Esophagus muscularis mucosa (tissue), 4 donors: ENCODE measurements at regions of chr17 and their contacts with region 1.

Region 1: DNA sequence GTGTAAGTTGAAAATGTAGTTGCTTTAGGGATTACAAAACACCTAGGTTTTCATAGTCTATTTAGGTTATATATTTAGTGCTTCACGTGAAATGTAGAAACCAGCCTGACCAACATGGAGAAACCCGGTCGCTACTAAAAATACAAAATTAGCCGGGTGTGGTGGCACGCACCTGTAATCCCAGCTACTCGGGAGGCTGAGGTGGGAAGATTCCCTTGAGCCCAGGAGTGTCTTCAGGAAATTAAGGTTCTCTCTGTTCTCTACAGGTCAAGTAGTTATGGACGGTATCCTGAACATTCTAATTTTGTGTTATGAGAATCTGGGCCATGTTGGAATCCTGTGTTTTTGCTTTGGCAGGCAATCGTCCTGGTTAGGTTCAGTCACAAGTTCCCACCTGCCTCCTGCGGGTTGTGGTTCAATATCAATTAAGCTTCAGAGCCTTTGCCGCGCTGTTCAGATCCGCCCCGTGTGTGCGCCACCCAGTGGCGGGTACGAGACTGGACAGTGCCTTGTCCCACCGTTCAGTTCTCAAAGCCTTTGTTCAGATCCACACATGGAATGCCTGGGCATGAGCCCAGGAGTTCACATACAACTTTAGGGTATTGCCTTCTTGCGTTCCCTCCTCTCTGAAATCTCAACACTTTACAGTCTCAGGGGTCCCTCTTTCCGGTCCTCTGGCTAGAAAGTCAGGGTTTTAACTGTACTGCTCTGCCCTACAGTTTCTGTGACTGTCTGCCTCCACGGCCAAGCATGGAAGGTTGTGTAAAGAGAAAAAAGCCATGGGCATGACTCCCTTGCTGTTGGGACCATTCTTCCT is 41.7 kb downstream of the HEATR6 start:
- DNase-seq: no peak
- H3K4me3 ChIP-seq: no peak overlapping the region
- H3K27ac ChIP-seq: no peak overlapping the region
- H3K4me1 ChIP-seq: peaks cover 0 to 9% (median 8%) of the 10 kb centered on the region in 4 donors
- H3K27me3 ChIP-seq: peaks cover 0 to 5% (median 0%) of the 10 kb centered on the region in 4 donors
- CTCF ChIP-seq: peak; percentile 74 to 89 (median 74)
- EP300 ChIP-seq: no peak
- POLR2A ChIP-seq: no peak

Region 2: GRCh38 chr17:59038734-59039133 is 998.3 kb before region 1 on chr17:
- intact Hi-C with region 1: no loop called
- DNase-seq: no peak
- H3K4me3 ChIP-seq: no peak overlapping the region
- H3K27ac ChIP-seq: no peak overlapping the region
- H3K4me1 ChIP-seq: no peaks in the 10 kb centered on the region
- H3K27me3 ChIP-seq: no peaks in the 10 kb centered on the region
- CTCF ChIP-seq: no peak
- EP300 ChIP-seq: no peak
- POLR2A ChIP-seq: no peak

Region 3: DNA sequence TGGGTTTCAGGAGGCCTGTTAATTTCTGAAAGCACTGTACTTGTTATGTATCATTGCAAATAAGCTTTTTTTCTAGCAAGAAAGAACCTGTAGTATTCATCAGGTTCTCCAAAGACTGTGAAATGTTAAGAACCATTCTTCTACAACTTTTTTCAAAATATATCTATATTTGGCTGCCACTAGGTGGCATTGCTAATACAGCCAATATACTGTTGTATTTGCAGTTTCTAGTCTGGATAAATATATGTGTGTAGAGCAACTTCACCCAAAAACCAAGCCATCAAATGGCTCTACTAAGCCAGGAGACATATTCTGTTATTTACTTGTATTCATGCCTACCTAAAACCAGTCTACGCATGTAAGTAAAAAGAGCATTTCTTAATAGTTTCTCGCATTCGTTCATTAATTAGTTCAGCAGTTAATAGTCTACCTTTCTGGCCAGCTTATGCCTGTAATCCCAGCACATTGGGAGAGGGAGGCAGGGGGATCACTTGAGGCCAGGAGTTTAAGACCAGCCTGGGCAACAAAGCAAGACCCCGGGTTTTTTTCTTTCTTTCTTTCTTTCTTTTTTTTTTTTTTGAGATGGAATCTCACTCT is 290.1 kb before region 1 on chr17:
- intact Hi-C with region 1: loop called (anchors 5 kb)
- DNase-seq: no peak
- H3K4me3 ChIP-seq: no peak overlapping the region
- H3K27ac ChIP-seq: no peak overlapping the region
- H3K4me1 ChIP-seq: peaks cover 0 to 6% (median 0%) of the 10 kb centered on the region in 4 donors
- H3K27me3 ChIP-seq: no peaks in the 10 kb centered on the region
- CTCF ChIP-seq: peak; percentile 47 to 63 (median 61)
- EP300 ChIP-seq: no peak
- POLR2A ChIP-seq: no peak

Region 4: DNA sequence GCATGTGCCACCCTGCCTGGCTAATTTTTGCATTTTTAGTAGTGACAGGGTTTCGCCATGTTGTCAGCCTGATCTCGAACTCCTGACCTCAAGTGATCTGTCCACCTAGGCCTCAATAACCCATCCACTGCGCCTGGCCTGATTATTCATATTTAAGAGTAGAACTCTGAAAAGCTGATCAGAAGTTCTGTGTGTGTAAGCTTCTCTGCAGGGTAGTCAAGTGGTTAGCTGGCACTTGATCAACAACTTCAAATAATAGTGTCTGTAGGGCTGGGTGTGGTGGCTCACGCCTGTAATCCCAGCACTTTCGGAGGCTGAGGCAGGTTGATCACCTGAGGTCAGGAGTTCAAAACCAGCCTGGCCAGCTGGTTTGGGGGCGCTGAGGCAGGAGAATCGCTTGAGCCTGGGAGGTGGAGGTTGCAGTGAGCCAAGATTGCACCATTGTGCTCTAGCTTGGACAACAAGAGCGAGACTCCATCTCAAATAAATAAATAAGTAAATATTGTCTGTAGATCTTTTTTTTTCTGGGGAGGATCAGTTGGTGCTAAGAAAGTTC is 118.0 kb before region 1 on chr17:
- intact Hi-C with region 1: loop called (anchors 5 kb)
- DNase-seq: no peak
- H3K4me3 ChIP-seq: no peak overlapping the region
- H3K27ac ChIP-seq: no peak overlapping the region
- H3K4me1 ChIP-seq: peaks cover 0 to 4% (median 2%) of the 10 kb centered on the region in 4 donors
- H3K27me3 ChIP-seq: no peaks in the 10 kb centered on the region
- CTCF ChIP-seq: no peak
- EP300 ChIP-seq: no peak
- POLR2A ChIP-seq: no peak

Region 5: DNA sequence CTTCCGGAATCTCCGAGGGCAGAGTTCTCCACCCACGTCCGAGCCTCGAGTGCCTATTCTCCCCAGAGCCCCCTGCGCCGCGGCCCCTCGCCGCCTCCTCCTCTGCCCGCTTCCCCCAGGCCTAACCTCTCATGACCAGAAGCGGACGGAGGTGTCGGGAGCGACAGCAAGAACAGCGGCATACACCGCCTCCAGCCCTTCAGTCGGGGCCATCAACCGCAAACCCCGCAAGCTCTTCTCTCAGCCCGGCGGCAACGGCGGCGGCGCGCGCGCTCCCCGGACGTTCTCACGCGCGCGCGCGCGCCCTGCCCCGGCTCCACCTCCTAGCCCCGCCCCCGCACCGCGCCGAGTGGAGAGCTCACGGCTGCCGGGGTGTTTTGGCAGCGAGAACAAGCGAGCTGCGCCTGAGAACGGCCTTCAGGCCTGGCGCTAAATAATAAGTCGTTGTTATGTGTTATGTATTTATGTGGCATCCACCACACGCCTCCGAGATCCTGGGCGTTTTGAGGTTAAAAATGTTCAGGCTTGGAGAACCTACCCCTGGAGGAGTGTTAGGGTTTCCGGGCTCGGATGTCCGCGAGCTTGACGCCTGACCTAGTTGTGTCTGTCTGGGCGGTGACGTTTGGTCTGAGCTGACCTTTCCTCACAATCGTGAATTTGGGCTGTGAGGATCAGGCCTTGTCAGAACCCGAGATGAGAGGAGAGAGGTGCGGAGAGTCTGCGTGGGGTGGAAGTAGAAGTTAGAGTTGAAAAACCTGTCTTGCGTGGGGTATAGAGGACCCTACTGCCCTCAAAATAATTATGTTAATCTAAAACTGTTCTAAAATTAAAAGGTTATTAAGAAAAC is 72.3 kb before region 1 on chr17 and contains the start of gene RNFT1:
- intact Hi-C with region 1: loop called (anchors 5 kb)
- DNase-seq: peak; percentile 96
- H3K4me3 ChIP-seq: peak within 1 kb of the TSS; percentile 79 to 87 (median 83)
- H3K27ac ChIP-seq: peak within 1 kb of the TSS; percentile 94 to 96 (median 95)
- H3K4me1 ChIP-seq: peaks cover 15 to 22% (median 19%) of the 10 kb centered on the region in 4 donors
- H3K27me3 ChIP-seq: no peaks in the 10 kb centered on the region
- CTCF ChIP-seq: peak in 1 of 3 experiments; percentile 1
- EP300 ChIP-seq: no peak
- POLR2A ChIP-seq: peak; percentile 40
- total RNA-seq, gene RNFT1: 6.2 to 10.8 (median 9.1) TPM

Region 6: DNA sequence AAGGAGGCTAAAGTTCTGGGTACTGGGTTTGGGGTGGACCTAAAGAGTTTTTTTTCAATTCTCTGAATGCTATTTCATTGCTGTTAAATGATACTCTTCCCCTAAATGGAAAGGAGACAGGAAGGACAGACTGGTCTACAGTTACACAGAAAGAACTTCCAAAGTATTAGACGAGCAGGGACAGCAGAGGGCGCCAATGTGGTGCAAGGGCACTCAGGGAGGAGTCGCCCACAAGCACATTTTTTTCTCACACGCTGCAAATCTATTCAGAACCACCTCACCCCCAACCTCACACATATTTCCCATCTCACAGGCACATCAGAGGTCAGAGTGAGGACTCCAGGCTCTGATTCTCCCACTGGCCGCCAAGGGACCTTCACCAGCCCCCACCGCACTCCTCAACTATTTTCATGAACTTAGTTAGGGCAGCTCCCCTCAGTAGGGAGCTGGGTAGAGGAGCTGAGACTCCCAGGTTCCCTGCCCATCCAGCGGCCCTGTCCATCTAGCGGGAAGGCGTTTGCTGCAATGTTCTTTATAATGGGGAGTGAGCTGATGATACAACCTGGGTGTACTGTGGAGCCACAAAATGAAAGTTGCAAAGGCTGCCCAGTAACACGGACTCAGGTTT is 106.0 kb after region 1 on chr17:
- intact Hi-C with region 1: no loop called
- DNase-seq: no peak
- H3K4me3 ChIP-seq: peak overlapping the region in 1 of 4 donors; percentile 18
- H3K27ac ChIP-seq: no peak overlapping the region
- H3K4me1 ChIP-seq: peaks cover 34 to 44% (median 41%) of the 10 kb centered on the region in 4 donors
- H3K27me3 ChIP-seq: peaks cover 0 to 92% (median 40%) of the 10 kb centered on the region in 4 donors
- CTCF ChIP-seq: peak; percentile 44 to 72 (median 54)
- EP300 ChIP-seq: no peak
- POLR2A ChIP-seq: no peak